B cell (primary cell): ENCODE measurements at regions of chr17 and their contacts with region 1.

Region 1: DNA sequence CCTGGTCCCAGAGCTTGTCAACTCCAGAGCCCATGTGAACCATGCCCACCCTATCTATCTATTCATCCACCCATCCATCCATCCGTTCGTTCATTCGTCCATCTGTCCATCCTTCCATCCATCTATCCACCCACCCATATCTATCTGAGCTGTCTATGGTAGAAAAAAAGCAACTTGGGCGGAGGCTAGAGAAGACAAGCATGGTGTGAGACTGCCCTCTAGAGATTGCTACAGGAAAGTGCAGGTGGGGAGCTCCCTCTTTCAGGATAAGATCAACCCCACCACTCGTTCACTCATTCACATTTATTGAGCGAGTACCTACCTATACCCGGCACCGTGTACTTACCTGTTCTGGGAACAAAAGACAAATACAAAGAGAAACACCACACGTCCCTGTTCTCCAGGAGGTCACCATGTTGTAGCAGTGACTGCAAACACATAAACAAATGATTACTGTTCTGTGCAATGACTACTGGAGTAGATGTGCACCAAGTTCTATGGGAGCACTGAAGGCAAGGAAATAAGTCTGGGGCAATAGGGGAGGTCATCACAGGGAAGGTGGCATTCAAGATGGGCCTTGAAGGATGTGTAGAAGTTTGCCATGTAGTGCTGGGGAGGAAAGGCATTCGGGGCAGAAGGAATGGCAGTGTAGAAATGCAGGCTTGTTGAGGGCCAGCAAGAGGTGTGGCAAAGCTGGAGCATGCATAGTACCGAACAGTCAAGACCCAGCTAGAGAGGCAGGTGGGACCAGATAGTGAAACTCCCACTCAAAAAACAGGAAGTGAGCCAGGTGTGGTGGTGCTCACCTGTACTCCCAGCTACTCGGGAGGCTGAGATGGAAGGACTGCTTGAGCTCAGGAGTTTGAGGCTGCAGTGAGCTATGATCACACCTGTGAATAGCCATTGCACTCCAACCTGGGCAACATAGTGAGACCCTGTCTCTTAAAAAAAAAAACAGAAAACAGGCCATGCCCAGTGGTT is 13.4 kb upstream of the ATP5MC1 start:
- DNase-seq: peak; percentile 82
- ATAC-seq: peak; percentile 93
- H3K4me3 ChIP-seq: no peak overlapping the region
- H3K4me3 Mint-ChIP-seq: no peak overlapping the region
- H3K27ac ChIP-seq: no peak overlapping the region
- H3K27ac Mint-ChIP-seq: no peak overlapping the region
- H3K4me1 ChIP-seq: peaks cover 0 to 4% of the 10 kb centered on the region in 2 donors
- H3K4me1 Mint-ChIP-seq: no peaks in the 10 kb centered on the region
- H3K27me3 ChIP-seq: peaks cover 0 to 3% (median 0%) of the 10 kb centered on the region in 4 experiments
- H3K27me3 Mint-ChIP-seq: peaks cover 7% of the 10 kb centered on the region
- CTCF ChIP-seq: peak; percentile 95

Region 2: GRCh38 chr17:48671697-48672171 is 207.5 kb before region 1 on chr17:
- CTCF ChIA-PET with region 1: interaction called, 119 read pairs
- POLR2A ChIA-PET with region 1: no interaction called
- intact Hi-C with region 1: loop called (anchors 2 kb)
- DNase-seq: peak; percentile 72
- ATAC-seq: peak; percentile 64
- H3K4me3 ChIP-seq: no peak overlapping the region
- H3K4me3 Mint-ChIP-seq: peak overlapping the region; percentile 26
- H3K27ac ChIP-seq: no peak overlapping the region
- H3K27ac Mint-ChIP-seq: no peak overlapping the region
- H3K4me1 ChIP-seq: peaks cover 6 to 7% of the 10 kb centered on the region in 2 donors
- H3K4me1 Mint-ChIP-seq: peaks cover 3% of the 10 kb centered on the region
- H3K27me3 ChIP-seq: peaks cover 0 to 28% (median 16%) of the 10 kb centered on the region in 4 experiments
- H3K27me3 Mint-ChIP-seq: peaks cover 46% of the 10 kb centered on the region
- CTCF ChIP-seq: peak; percentile 87

Region 3: DNA sequence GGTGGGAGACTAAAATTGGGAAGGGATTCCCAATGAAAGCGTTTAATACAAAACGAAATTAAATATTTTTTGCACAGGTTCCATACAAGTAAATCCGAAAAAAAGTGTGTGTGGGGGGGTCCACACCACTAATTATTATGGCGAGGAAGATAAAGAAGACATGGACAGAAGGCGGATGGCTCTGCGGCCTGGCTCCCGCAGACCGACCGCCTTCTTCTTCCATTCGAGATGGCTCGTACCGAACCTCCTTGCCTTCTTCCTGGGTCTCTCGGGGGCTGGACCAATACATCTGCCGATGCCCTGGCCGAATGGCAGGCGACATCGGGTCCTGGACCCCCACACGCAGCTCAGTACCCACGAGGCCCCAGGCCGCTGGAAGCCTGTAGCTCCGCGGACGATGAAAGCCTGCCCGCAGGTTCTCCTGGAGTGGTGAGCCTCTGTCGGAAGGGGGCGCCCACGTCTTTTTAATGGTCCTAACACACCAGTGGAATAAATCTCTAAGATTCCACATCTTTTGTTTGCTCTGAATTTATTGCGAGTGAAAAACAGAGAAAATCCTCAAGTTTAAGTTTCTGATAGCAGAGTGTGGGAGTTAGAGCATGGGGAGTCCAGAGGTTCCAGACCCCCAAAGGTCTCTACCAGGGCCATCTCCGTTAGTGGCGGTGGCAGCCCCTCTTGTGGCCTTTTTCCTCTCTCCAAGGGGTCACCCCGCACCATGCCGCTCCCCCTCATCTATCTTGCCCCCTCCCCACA is 154.8 kb before region 1 on chr17:
- CTCF ChIA-PET with region 1: interaction called, 21 read pairs
- POLR2A ChIA-PET with region 1: no interaction called
- intact Hi-C with region 1: loop called (anchors 1 kb)
- DNase-seq: peak; percentile 77
- ATAC-seq: peak; percentile 47
- H3K4me3 ChIP-seq: peak overlapping the region in 1 of 5 experiments; percentile 18
- H3K4me3 Mint-ChIP-seq: peak overlapping the region; percentile 62
- H3K27ac ChIP-seq: no peak overlapping the region
- H3K27ac Mint-ChIP-seq: peak overlapping the region; percentile 69
- H3K4me1 ChIP-seq: peaks cover 51 to 77% of the 10 kb centered on the region in 2 donors
- H3K4me1 Mint-ChIP-seq: peaks cover 35% of the 10 kb centered on the region
- H3K27me3 ChIP-seq: peaks cover 0 to 100% (median 89%) of the 10 kb centered on the region in 4 experiments
- H3K27me3 Mint-ChIP-seq: peaks cover 80% of the 10 kb centered on the region
- CTCF ChIP-seq: peak; percentile 68

Region 4: DNA sequence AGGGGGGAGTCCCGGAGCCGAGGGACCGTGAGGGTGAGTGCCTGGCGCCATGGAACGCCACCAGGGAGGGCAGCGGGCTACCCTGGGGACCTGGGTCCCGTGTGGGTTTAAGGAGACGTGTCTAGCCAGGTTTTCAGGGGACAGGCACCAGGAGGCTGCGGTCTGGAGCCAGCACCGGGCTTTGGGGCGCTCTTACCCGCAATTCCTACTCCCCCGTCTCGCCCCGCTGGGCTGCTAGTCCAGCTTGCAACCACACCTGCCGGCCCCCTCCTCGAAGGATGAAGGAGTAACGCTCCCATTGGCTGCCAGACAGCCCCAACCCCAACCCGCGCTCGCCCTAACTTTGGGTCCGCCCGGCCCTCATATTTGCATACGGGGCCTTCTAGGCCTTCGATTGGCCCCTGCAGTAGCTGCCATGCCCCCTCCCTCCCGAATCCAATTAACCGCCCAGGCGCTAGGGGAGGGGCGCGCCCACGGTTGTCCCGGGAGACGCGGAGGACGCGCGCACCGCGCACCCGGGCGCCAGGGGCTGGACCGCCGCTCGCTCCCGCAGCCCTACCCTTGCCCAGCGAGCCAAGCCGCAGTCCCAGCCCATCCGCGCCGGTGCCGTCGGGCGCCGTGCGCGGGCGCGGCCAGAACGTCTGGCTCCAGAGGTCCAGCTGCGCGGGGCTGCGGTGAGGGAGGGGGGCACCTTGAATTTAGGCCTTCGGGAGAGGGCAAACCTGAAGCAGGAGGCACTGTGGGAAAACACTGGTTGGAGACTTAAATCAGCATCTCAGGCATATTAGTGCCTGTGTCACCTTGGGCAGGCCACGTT is 62.2 kb before region 1 on chr17 and contains the start of gene TTLL6:
- CTCF ChIA-PET with region 1: interaction called, 730 read pairs
- POLR2A ChIA-PET with region 1: no interaction called
- intact Hi-C with region 1: loop called (anchors 1 kb)
- DNase-seq: peak; percentile 75
- ATAC-seq: peak; percentile 94
- H3K4me3 ChIP-seq: peak within 1 kb of the TSS; percentile 38 to 67 (median 48)
- H3K4me3 Mint-ChIP-seq: peak within 1 kb of the TSS; percentile 88
- H3K27ac ChIP-seq: no peak within 1 kb of the TSS
- H3K27ac Mint-ChIP-seq: peak within 1 kb of the TSS; percentile 60
- H3K4me1 ChIP-seq: peaks cover 14 to 17% of the 10 kb centered on the region in 2 donors
- H3K4me1 Mint-ChIP-seq: peaks cover 17% of the 10 kb centered on the region
- H3K27me3 ChIP-seq: peaks cover 0 to 51% (median 17%) of the 10 kb centered on the region in 4 experiments
- H3K27me3 Mint-ChIP-seq: peaks cover 39% of the 10 kb centered on the region
- CTCF ChIP-seq: no peak
- total RNA-seq, gene TTLL6: not detected in 2 replicates

Region 5: DNA sequence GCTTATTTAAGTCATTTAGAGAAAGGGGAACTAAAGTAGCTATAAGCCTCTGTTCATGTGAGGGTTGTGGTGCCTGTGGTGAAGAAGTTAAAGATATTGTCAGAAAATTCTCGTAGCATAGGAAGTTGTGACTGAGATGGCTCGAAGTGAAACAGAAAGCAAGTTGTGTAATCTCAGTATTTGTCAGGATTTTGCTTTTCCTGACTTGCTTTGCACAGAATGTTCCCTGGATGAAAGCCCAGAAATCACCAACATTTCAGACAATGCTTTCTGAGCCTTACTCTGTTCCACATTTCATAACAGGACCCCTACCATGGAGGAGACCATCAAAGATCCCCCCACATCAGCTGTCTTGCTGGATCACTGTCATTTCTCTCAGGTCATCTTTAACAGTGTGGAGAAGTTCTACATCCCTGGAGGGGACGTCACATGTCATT is 37.8 kb before region 1 on chr17:
- CTCF ChIA-PET with region 1: interaction called, 30 read pairs
- POLR2A ChIA-PET with region 1: no interaction called
- intact Hi-C with region 1: no loop called
- DNase-seq: peak; percentile 83
- ATAC-seq: peak; percentile 91
- H3K4me3 ChIP-seq: peak overlapping the region; percentile 23 to 56 (median 46)
- H3K4me3 Mint-ChIP-seq: peak overlapping the region; percentile 90
- H3K27ac ChIP-seq: peak overlapping the region; percentile 76 to 91
- H3K27ac Mint-ChIP-seq: peak overlapping the region; percentile 96
- H3K4me1 ChIP-seq: peaks cover 47 to 48% of the 10 kb centered on the region in 2 donors
- H3K4me1 Mint-ChIP-seq: peaks cover 42% of the 10 kb centered on the region
- H3K27me3 ChIP-seq: no peaks in the 10 kb centered on the region
- H3K27me3 Mint-ChIP-seq: no peaks in the 10 kb centered on the region
- CTCF ChIP-seq: no peak

Region 6: GRCh38 chr17:48892940-48893645 is 13.9 kb after region 1 on chr17:
- CTCF ChIA-PET with region 1: interaction called, 20 read pairs
- POLR2A ChIA-PET with region 1: interaction called, 3 read pairs
- intact Hi-C with region 1: no loop called
- DNase-seq: no peak
- ATAC-seq: no peak
- H3K4me3 ChIP-seq: peak overlapping the region; percentile 31 to 85 (median 75)
- H3K4me3 Mint-ChIP-seq: peak overlapping the region; percentile 95
- H3K27ac ChIP-seq: peak overlapping the region; percentile 88
- H3K27ac Mint-ChIP-seq: peak overlapping the region; percentile 93
- H3K4me1 ChIP-seq: peaks cover 17 to 23% of the 10 kb centered on the region in 2 donors
- H3K4me1 Mint-ChIP-seq: peaks cover 23% of the 10 kb centered on the region
- H3K27me3 ChIP-seq: no peaks in the 10 kb centered on the region
- H3K27me3 Mint-ChIP-seq: no peaks in the 10 kb centered on the region
- CTCF ChIP-seq: no peak

Region 7: GRCh38 chr17:49031965-49032928 is 153.0 kb after region 1 on chr17:
- CTCF ChIA-PET with region 1: interaction called, 13 read pairs
- POLR2A ChIA-PET with region 1: no interaction called
- intact Hi-C with region 1: loop called (anchors 1 kb)
- DNase-seq: peak; percentile 66
- ATAC-seq: peak; percentile 56
- H3K4me3 ChIP-seq: no peak overlapping the region
- H3K4me3 Mint-ChIP-seq: no peak overlapping the region
- H3K27ac ChIP-seq: no peak overlapping the region
- H3K27ac Mint-ChIP-seq: no peak overlapping the region
- H3K4me1 ChIP-seq: peaks cover 4% of the 10 kb centered on the region in 2 donors
- H3K4me1 Mint-ChIP-seq: peaks cover 2% of the 10 kb centered on the region
- H3K27me3 ChIP-seq: peaks cover 0 to 18% (median 4%) of the 10 kb centered on the region in 4 experiments
- H3K27me3 Mint-ChIP-seq: peaks cover 6% of the 10 kb centered on the region
- CTCF ChIP-seq: peak; percentile 83

Region 8: GRCh38 chr17:49556223-49556971 is 677.2 kb after region 1 on chr17:
- CTCF ChIA-PET with region 1: no interaction called
- POLR2A ChIA-PET with region 1: no interaction called
- intact Hi-C with region 1: no loop called
- DNase-seq: peak; percentile 85
- ATAC-seq: peak; percentile 94
- H3K4me3 ChIP-seq: no peak overlapping the region
- H3K4me3 Mint-ChIP-seq: no peak overlapping the region
- H3K27ac ChIP-seq: no peak overlapping the region
- H3K27ac Mint-ChIP-seq: no peak overlapping the region
- H3K4me1 ChIP-seq: peaks cover 0 to 6% of the 10 kb centered on the region in 2 donors
- H3K4me1 Mint-ChIP-seq: peaks cover 1% of the 10 kb centered on the region
- H3K27me3 ChIP-seq: peaks cover 0 to 7% (median 0%) of the 10 kb centered on the region in 4 experiments
- H3K27me3 Mint-ChIP-seq: peaks cover 5% of the 10 kb centered on the region
- CTCF ChIP-seq: peak; percentile 98